Posterior cingulate gyrus (tissue), 11 donors: ENCODE measurements at regions of chr14 and their contacts with region 1.

Region 1: DNA sequence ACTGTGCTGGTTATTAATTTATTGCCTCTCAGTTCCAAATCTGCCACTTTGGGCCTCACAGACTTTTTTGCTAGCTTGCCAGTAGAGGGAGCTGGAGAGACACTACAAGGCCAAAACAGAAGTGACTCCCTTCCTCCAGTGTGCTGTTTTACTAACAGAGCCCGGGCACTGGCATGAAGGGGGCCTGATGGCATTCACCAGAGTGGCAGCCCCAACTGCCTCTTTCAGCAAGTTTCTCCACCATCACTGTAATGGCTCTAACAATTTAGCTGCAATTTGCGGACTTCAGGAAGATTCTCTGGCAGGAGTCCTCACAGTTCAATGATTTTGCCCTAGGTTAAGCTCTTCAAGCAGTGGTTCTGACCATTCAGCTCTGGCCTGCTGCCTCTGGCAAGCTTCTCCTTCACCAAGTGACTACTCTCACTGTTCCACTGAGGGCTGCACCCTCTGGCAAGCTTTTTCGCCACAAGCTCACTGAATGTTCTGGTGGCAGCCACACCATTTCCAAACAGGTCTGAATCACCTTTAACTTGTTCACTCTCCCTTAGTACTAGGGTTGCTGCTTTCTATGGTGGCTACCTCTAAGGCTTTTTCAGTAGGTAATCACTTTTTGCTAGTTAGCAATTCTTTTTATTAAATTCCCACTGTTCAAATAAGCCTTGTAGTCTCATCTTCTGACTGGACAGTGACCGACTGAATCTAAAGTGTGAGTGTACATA is 104.9 kb downstream of the ZC3H14 start:
- DNase-seq: peak in 7 of 10 donors; percentile 33 to 85 (median 46)

Region 2: DNA sequence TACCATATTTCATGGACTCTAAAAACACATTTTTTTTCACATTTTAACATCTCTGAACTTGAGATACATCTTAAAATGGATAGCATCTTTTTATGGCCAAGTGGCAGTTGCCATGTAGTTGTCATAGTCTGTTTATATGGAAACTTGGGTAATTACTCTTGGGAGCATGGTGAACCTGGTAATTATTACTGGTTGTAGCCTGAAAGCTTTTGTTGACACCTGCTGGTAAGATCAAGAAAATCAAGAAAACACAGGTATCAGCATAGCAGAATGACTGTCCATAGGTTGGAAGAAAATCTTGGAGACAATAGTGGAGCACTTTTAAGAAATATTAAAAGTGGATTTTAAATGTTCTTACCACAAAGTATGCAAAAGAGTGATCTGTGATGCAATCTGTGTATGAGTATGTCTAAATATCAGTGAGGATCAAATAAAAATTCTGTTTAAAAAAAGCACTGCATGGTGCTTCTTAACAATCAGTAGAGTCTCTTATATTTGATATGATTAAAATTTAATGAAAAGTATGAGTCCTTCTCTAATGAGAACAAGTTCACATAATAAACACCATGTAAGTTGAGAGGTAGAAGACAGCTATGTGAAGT is 200.9 kb after region 1 on chr14:
- intact Hi-C with region 1: loop called (anchors 5 kb)
- DNase-seq: no peak